ENCODE measurements at regions of chrX and their contacts with region 1.

Region 1: DNA sequence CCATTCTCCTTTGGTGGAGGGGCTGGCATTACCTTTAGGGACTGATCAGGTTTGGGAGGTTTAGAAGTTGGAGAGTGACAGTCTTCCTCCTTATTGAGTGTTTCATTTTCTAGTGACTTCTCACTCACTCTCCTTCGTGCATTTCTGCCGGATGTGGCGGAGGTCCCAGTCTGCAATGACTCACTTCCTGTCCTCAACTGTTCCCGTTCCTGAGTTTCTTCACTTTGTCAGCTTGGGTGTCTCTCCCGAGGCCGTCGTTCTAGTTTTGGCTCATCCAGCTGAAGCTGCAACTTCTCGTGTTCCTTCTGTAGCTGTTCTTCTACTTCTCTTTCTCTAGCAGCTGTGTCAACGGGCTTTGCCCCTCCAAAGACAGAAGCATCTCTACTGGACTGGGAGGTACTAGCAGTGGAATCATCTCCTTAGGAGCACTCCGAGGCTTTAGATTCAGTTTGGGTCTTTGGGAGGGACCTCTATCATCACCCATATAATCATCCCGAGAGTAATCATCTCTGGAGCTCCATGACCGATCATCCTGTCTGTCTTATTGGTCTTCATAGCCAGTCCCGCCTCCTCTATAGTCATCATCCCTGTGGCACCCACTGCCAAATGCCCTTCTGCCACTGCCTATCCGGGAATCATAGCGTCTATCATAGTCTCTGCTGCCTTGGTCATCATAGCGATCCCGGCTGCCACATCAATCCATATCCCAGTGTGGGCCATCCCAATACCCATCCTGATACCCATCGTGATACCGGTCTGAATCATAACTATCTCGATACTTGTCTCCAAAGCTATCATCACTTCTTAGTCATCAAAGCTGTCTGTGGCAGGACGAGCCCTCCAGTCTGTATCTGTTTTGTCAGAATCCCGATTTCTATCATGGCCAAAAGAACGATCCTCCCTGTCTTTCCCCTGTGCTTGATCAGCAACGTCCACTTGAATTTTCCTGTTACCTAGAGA is 35.3 kb upstream of the VSIG4 start:
- DNase-seq: peak; percentile 9 to 48
- ATAC-seq: no peak
- H3K4me3 ChIP-seq: no peak overlapping the region
- H3K27ac ChIP-seq: no peak overlapping the region
- H3K4me1 ChIP-seq: no peaks in the 10 kb centered on the region
- H3K27me3 ChIP-seq: no peaks in the 10 kb centered on the region
- CTCF ChIP-seq: no peak
- POLR2A ChIP-seq: no peak

Region 2: GRCh38 chrX:65971151-65971550 is 104.0 kb before region 1 on chrX:
- in situ Hi-C with region 1: no loop called
- intact Hi-C with region 1: no loop called
- DNase-seq: no peak
- ATAC-seq: no peak
- H3K4me3 ChIP-seq: no peak overlapping the region
- H3K27ac ChIP-seq: no peak overlapping the region
- H3K4me1 ChIP-seq: no peaks in the 10 kb centered on the region
- H3K27me3 ChIP-seq: peaks cover 0 to 5% (median 0%) of the 10 kb centered on the region in 3 donors
- CTCF ChIP-seq: no peak
- POLR2A ChIP-seq: no peak

Region 3: GRCh38 chrX:66126662-66127061 is 51.5 kb after region 1 on chrX:
- in situ Hi-C with region 1: no loop called
- intact Hi-C with region 1: no loop called
- DNase-seq: no peak
- ATAC-seq: no peak
- H3K4me3 ChIP-seq: no peak overlapping the region
- H3K27ac ChIP-seq: no peak overlapping the region
- H3K4me1 ChIP-seq: no peaks in the 10 kb centered on the region
- H3K27me3 ChIP-seq: no peaks in the 10 kb centered on the region
- CTCF ChIP-seq: no peak
- POLR2A ChIP-seq: no peak

Region 4: GRCh38 chrX:66163849-66164411 is 88.7 kb after region 1 on chrX and contains the start of gene HEPH:
- in situ Hi-C with region 1: loop called in 1 of 4 experiments (anchors 25 kb)
- intact Hi-C with region 1: no loop called
- DNase-seq: no peak
- ATAC-seq: no peak
- H3K4me3 ChIP-seq: no peak within 1 kb of the TSS
- H3K27ac ChIP-seq: no peak within 1 kb of the TSS
- H3K4me1 ChIP-seq: no peaks in the 10 kb centered on the region
- H3K27me3 ChIP-seq: no peaks in the 10 kb centered on the region
- CTCF ChIP-seq: no peak
- POLR2A ChIP-seq: no peak
- total RNA-seq, gene HEPH: 0.29 to 1.2 (median 0.80) TPM in 3 of 4 donors, not detected in the other